ENCODE measurements at regions of chr17 and their contacts with region 1.

Region 1: GRCh38 chr17:1390433-1391367 is 9.3 kb downstream of the YWHAE start:
- DNase-seq: no peak
- ATAC-seq: no peak
- H3K4me3 ChIP-seq: no peak overlapping the region
- H3K4me3 Mint-ChIP-seq: peak overlapping the region; percentile 52
- H3K27ac ChIP-seq: peak overlapping the region in 1 of 2 donors; percentile 62
- H3K27ac Mint-ChIP-seq: no peak overlapping the region
- H3K4me1 ChIP-seq: peaks cover 59 to 61% of the 10 kb centered on the region in 2 donors
- H3K4me1 Mint-ChIP-seq: peaks cover 69% of the 10 kb centered on the region
- H3K27me3 ChIP-seq: no peaks in the 10 kb centered on the region
- H3K27me3 Mint-ChIP-seq: no peaks in the 10 kb centered on the region
- CTCF ChIP-seq: no peak

Region 2: GRCh38 chr17:1374431-1375177 is 16.1 kb before region 1 on chr17:
- CTCF ChIA-PET with region 1: interaction called, 6 read pairs
- POLR2A ChIA-PET with region 1: interaction called, 5 read pairs
- intact Hi-C with region 1: loop called (anchors 2 kb)
- DNase-seq: peak; percentile 44
- ATAC-seq: peak; percentile 49
- H3K4me3 ChIP-seq: no peak overlapping the region
- H3K4me3 Mint-ChIP-seq: peak overlapping the region; percentile 47
- H3K27ac ChIP-seq: no peak overlapping the region
- H3K27ac Mint-ChIP-seq: peak overlapping the region; percentile 77
- H3K4me1 ChIP-seq: peaks cover 50 to 52% of the 10 kb centered on the region in 2 donors
- H3K4me1 Mint-ChIP-seq: peaks cover 75% of the 10 kb centered on the region
- H3K27me3 ChIP-seq: no peaks in the 10 kb centered on the region
- H3K27me3 Mint-ChIP-seq: no peaks in the 10 kb centered on the region
- CTCF ChIP-seq: no peak

Region 3: GRCh38 chr17:1413281-1413791 is 22.6 kb after region 1 on chr17:
- CTCF ChIA-PET with region 1: no interaction called
- POLR2A ChIA-PET with region 1: no interaction called
- intact Hi-C with region 1: no loop called
- DNase-seq: no peak
- ATAC-seq: no peak
- H3K4me3 ChIP-seq: no peak overlapping the region
- H3K4me3 Mint-ChIP-seq: no peak overlapping the region
- H3K27ac ChIP-seq: no peak overlapping the region
- H3K27ac Mint-ChIP-seq: no peak overlapping the region
- H3K4me1 ChIP-seq: no peaks in the 10 kb centered on the region
- H3K4me1 Mint-ChIP-seq: peaks cover 2% of the 10 kb centered on the region
- H3K27me3 ChIP-seq: no peaks in the 10 kb centered on the region
- H3K27me3 Mint-ChIP-seq: no peaks in the 10 kb centered on the region
- CTCF ChIP-seq: no peak